ENCODE measurements at regions of chr2 and their contacts with region 1.

Region 1: DNA sequence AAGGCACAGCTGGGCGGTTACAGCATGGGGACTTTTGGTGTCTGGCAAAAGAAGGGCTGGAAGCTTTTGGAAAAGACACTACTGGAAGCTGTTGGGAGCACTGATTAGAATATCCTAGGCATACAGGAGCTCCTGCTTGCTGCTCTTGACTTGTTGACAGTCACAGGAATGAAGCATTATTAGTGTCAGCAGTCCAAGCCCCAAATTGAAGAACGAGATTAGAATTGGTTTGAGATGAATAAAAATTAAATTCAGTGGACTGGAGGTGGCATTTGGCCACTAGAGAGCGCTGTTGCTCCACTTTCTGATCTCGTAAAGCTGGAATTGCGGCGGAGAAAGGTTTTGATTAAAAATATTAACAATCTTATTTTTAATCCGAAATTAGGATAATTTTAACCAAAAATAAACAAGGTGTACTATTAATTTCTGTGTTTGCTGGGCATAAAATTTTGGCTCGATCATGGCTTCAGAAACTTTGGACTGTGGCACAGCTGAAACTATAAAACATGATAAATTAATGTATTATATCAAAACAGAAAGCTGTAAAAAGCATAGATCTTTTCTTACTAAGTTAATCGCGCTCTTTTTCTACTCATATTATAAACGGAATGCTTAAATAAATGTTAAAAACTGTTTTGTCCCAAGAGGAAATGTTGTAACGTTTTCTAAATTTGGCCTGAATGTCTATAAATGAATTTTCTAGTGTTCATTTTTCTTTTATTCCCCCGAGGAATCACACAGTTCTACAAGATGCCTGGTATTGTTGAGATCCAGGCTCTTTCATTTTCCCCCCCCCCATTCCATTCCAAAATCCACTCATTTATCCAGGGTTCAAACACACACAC is 2.4 kb upstream of the HOXD8 start:
- DNase-seq: peak; percentile 66
- ATAC-seq: no peak

Region 2: GRCh38 chr2:176039375-176039774 is 87.8 kb before region 1 on chr2:
- intact Hi-C with region 1: no loop called
- DNase-seq: no peak
- ATAC-seq: no peak

Region 3: DNA sequence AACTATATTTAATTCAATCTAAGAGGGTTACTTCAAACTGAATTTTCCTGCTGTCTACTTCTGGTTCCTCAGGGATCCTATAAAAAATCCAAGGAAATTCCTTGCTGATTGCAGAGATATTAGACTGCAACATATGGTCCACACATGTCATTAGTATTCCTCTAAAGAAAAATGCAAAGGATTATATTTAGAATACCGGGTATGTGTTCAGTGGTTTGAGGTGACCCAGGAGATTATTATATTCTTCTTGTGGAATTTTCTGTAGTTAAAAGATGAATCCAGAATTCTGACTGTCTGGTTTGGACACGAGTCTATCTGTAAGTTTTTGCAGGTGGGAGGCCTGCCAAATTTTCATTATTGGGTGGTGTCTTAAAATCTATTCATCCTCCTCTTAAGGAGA is 79.5 kb after region 1 on chr2:
- intact Hi-C with region 1: no loop called
- DNase-seq: no peak
- ATAC-seq: no peak

Region 4: DNA sequence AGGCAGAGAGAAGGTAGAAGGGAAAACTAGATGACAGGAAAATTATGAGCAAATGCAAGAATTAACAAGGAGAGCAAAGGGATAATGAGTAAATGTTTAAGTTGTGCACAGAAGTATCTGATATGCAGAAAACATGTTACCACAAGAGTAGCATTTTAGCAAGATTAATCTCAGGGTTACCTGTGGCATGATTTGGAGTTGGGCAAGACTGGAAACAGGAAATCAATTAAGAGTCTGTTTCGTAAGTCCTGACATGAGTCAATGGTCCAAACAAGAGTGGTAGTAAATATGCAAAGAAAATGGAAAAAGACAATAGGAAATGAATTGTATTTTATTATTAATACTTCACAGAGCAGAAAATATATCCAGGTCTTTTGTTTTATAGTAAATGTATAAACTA is 124.8 kb after region 1 on chr2:
- intact Hi-C with region 1: no loop called
- DNase-seq: no peak
- ATAC-seq: no peak

Region 5: DNA sequence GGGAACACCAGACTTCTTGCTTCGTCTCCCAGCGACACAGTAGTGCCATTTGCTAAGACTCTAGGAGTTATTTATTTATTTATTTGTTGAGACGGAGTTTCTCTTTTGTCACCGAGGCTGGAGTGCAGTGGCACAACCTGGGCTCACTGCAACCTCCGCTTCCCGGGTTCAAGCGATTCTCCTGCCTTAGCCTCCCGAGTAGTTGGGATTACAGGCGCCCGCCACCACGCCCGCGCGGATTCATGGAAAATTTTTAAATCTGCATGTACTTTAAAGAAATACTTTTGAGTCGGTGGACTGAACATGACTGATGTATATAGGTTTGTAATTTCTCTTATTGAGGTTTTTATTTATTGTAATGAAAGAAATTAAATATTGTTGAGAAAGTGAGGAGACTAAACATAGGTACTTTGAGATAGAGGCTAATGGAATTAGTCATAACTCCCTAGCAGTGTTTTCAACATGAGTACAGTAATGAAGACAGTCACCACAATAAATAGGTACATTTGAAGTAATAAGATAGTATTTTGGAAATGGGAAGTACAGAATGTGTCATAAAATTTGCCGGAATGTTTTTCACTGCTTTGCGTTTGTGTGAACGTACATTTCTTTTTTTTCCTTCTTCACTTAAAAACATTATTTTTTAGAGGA is 143.1 kb after region 1 on chr2:
- intact Hi-C with region 1: no loop called
- DNase-seq: no peak
- ATAC-seq: peak; percentile 7

Region 6: GRCh38 chr2:176814306-176815052 is 687.3 kb after region 1 on chr2:
- intact Hi-C with region 1: loop called (anchors 10 kb)
- DNase-seq: no peak
- ATAC-seq: no peak

Region 7: DNA sequence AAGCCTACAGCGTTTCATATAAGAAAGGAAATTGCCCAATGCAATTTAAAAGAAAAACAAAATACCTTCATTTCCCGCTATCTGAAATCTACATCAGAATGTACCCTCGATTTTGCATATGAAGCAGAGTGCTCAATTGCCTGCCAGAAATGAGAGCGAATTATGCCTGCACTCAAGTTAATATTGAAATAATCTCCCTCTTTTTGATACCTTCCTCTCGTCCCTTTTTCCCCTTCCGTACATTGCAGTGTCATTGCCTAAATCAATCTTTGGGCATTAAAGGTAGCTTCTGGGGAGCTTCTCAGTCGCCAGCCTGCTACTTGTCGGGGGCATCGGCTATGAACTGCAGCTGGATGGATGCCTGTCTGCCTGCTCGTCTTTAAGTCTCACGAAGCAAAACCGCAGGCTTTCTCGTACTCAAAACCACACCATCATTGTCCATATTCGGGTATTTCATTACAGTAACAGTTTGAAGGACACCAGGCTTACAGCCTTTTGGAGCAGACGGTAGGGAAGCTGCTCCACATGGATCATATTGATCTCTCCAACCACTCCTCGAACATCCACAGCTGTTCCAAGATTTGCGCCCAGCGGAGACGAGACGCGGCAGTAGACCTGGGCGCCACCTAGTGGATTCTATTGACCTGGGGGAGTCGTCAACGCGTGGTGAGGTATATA is 1021.5 kb after region 1 on chr2:
- intact Hi-C with region 1: loop called (anchors 10 kb)
- DNase-seq: peak; percentile 75
- ATAC-seq: peak; percentile 92

Measured in Right ventricle myocardium superior (tissue), 1 donor.